Gastrocnemius medialis (tissue), 4 donors: ENCODE measurements at regions of chr19 and their contacts with region 1.

Region 1: GRCh38 chr19:5128251-5128935 is 159.5 kb downstream of the KDM4B start:
- DNase-seq: peak in 1 of 2 donors; percentile 59
- ATAC-seq: peak; percentile 20 to 56
- H3K4me3 ChIP-seq: peak overlapping the region in 1 of 4 donors; percentile 20
- H3K27ac ChIP-seq: peak overlapping the region in 3 of 4 donors; percentile 42 to 71 (median 52)
- H3K4me1 ChIP-seq: peaks cover 14 to 27% of the 10 kb centered on the region in 2 donors
- H3K27me3 ChIP-seq: no peaks in the 10 kb centered on the region
- CTCF ChIP-seq: no peak
- POLR2A ChIP-seq: no peak

Region 2: DNA sequence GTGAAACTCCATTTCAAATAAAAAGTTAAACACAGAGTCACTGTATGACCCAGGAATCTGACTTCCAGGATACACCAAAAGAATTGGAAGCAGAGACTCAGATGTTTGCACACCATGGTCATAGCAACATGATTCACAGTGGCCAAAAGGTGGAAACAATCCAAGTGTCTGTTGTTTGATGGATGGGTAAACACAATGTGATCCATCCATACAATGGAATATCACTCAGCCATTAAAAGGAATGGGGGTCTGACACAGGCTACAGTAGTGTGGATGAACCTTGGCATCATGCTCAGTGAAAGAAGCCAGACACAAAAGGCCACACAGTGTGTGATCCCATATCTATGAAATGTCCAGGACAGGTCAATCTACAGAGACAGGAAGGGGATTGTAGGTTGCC is 37.9 kb after region 1 on chr19:
- in situ Hi-C with region 1: no loop called
- intact Hi-C with region 1: loop called (anchors 5 kb)
- DNase-seq: no peak
- ATAC-seq: peak in 1 of 2 donors; percentile 26
- H3K4me3 ChIP-seq: no peak overlapping the region
- H3K27ac ChIP-seq: no peak overlapping the region
- H3K4me1 ChIP-seq: no peaks in the 10 kb centered on the region
- H3K27me3 ChIP-seq: no peaks in the 10 kb centered on the region
- CTCF ChIP-seq: no peak
- POLR2A ChIP-seq: no peak

Region 3: DNA sequence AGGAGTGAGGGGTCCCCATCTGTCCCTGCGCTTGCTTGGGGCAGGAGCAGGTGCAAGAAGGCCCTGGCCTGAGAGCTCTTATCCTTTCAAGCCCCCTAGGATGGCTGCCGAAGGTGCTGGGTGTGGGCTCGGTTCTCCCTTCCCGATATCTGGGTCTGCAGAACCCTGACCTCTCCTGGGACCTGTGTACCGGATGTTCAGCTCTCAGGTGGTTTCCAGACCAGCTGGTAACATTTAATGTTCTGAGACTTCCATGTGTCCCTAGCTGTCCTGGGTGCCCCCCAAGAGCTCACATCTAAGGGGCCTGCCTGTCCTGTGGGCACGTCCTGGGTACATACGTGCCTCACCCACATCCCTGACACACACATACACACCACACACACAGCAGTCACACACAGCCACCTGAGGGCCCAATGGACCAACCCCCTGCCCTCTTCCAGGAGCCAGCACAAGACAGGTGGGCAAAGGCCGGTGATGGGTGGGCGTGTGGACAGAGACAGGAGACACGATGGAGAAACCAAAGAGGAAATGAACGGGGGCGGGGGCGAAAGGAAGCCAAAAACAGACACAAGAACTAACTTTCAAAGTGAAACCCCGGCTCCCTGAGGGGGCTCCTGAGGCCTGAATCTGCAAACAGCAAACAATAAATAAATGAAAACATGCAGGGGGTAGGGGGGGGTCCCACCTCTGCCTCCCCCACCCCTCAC is 87.9 kb after region 1 on chr19:
- in situ Hi-C with region 1: no loop called
- intact Hi-C with region 1: no loop called
- DNase-seq: no peak
- ATAC-seq: no peak
- H3K4me3 ChIP-seq: no peak overlapping the region
- H3K27ac ChIP-seq: no peak overlapping the region
- H3K4me1 ChIP-seq: no peaks in the 10 kb centered on the region
- H3K27me3 ChIP-seq: no peaks in the 10 kb centered on the region
- CTCF ChIP-seq: no peak
- POLR2A ChIP-seq: no peak